ENCODE measurements at regions of chr16 and their contacts with region 1.

Region 1: DNA sequence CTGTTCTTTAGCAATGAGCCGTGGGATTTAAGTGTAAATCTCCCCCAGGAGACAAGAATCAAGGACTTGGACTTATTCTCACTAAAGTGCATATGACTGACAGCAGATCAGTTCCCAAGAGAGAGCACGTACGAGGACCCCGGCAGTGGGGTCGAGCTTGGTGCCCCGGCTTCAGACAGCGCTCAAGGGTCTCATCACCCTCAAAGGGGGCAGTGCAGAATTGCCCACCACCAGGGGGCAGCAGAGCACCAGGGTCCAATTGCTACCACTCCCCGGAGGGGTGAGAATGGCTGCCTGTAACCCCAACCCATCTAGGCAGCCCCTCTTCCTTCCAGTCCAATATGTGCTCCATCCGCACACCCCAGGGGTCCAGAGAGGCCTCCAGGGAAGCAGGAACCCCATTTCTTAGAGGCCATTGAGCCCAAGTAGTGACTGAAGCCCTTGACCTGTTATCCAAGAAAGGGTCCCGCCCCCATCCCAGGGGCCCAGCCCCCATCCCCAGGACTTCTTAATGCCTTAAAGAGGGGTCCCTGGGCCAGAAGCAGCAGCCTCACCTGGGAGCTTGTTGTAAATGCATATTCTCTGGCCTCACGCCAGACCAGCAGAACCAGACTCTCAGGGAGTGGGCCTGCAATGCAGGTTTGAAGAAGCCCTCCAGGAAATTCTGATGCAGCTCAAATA is 86.1 kb downstream of the ZDHHC7 start:
- DNase-seq: no peak
- H3K4me3 ChIP-seq: no peak overlapping the region
- H3K27me3 ChIP-seq: no peaks in the 10 kb centered on the region
- CTCF ChIP-seq: peak; percentile 92

Region 2: DNA sequence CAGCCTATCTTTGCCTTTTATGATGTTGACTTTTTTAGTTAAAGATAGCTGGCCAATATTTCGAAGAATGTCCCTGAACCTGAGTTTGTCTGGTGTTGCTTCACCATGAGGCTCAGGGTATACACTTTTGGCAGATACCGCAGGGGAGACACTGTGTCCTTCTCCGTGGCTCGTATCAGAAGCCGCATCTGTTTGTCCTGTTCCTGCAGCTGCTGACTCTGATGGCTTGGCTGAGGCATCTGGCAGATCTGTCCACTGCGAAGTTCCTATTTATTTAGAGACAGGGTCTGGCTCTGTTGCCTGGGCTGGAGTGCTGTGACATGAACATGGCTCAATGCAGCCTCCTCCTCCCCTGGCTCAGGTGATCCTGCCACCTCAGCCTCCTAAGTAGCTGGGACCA is 11.9 kb before region 1 on chr16:
- CTCF ChIA-PET with region 1: interaction called, 11 read pairs
- POLR2A ChIA-PET with region 1: no interaction called
- DNase-seq: no peak
- H3K4me3 ChIP-seq: no peak overlapping the region
- H3K27me3 ChIP-seq: peaks cover 7% of the 10 kb centered on the region
- CTCF ChIP-seq: no peak

Region 3: DNA sequence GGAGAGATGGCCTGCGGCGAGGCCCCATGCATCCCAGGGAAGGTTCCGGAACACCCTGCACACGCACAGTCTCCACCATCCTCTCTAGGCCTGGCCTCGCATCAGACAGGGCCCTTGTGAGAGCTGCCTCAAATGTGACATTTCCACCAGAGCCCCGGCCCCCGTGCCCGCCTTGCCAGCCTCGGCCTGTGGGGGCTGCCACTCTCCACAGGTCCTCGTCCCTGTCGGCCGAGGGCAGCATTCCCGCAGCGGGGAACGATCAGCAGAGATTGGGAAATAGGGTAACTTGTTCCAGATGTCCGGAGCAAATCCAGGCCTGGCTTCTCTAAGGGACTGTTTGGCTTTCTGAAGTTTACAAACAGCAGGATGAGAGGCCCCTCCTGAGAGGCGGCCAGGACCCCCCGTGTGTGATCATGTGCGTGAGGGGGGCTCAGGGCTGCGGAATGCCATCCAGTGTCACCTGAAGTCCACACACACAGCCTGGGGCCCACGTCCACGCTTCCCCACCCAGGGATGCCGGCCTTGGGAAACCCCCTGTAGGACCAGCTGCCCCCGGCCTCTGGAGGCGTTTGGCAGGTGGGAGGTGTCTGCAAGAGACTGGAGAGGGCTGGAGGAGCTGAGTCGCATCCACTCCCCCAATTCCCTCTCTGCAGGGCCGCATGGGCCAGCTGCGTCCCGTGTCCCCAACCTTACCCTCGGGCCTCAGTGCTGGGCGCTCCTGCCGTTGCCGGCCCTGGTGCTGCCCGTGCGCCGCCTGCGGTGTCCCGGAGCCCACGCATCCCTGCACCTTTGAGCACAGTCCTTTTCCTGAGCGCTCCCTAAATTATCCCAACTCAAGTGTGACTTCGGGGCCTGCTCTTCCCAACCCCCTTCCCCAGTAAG is 15.7 kb after region 1 on chr16:
- CTCF ChIA-PET with region 1: interaction called, 22 read pairs
- POLR2A ChIA-PET with region 1: no interaction called
- DNase-seq: no peak
- H3K4me3 ChIP-seq: no peak overlapping the region
- H3K27me3 ChIP-seq: no peaks in the 10 kb centered on the region
- CTCF ChIP-seq: peak; percentile 53

Measured in BJ (cell line).